CD8-positive, alpha-beta T cell (primary cell): ENCODE measurements at regions of chr12 and their contacts with region 1.

Region 1: GRCh38 chr12:110501752-110502738 is at the starts of genes RAD9B and VPS29:
- DNase-seq: peak; percentile 98 to 100 (median 99)
- ATAC-seq: peak; percentile 92
- H3K4me3 ChIP-seq: peak within 1 kb of the TSS; percentile 73 to 79
- H3K4me3 Mint-ChIP-seq: peak within 1 kb of the TSS; percentile 97
- H3K27ac ChIP-seq: peak within 1 kb of the TSS; percentile 74 to 89
- H3K27ac Mint-ChIP-seq: peak within 1 kb of the TSS; percentile 97
- H3K4me1 ChIP-seq: peaks cover 17% of the 10 kb centered on the region
- H3K4me1 Mint-ChIP-seq: peaks cover 38% of the 10 kb centered on the region
- H3K27me3 ChIP-seq: no peaks in the 10 kb centered on the region
- H3K27me3 Mint-ChIP-seq: no peaks in the 10 kb centered on the region
- CTCF ChIP-seq: no peak
- total RNA-seq, gene RAD9B: 0.57 to 1.5 TPM
- total RNA-seq, gene VPS29: 49.6 to 53.5 TPM

Region 2: DNA sequence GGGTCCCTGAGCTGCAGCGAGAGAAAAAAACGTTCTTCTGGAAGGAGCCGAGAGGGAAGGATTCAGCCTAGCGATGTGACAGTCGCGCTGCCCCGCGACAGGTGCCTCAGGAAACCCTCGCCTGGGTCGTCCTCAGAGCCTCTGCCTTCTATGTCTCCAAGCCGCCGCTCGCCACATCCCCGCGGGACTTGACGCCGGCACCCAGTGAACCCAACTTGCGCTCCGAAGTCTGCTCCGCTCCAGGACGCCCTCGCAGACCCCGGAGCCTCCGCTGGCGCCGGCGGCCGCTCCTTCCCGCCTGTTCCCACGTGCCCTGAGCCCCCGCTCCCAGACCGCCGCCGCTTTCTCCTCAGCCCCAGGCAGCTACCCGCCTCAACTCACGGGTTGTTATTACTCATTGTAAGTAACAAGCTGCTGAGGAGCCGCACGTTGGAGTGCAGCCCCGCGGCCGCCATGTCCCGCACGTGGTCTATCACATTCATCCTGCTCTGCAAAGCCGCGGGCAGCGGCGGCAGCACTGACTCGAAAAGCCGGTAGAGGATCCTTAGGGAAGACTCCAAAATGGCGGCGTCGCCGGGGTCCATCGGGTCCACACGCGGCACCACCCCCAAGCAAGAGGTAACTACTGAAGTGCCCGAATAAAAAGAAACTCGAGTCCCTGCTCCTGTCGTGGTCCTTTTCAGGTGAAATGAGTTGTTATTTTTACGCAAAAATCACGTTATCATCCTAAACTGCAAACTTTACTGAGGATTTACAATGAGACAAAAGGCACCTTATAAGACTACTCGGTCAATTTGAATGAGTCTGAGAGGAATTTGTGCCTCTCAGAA is 98.7 kb before region 1 on chr12 and contains the start of gene ANAPC7:
- CTCF ChIA-PET with region 1: no interaction called
- POLR2A ChIA-PET with region 1: no interaction called
- intact Hi-C with region 1: loop called in 1 of 2 experiments (anchors 1 kb)
- DNase-seq: peak; percentile 69 to 93 (median 87)
- ATAC-seq: peak; percentile 96
- H3K4me3 ChIP-seq: peak within 1 kb of the TSS; percentile 87 to 89
- H3K4me3 Mint-ChIP-seq: peak within 1 kb of the TSS; percentile 100
- H3K27ac ChIP-seq: peak within 1 kb of the TSS; percentile 78 to 96
- H3K27ac Mint-ChIP-seq: peak within 1 kb of the TSS; percentile 98
- H3K4me1 ChIP-seq: peaks cover 20% of the 10 kb centered on the region
- H3K4me1 Mint-ChIP-seq: peaks cover 33% of the 10 kb centered on the region
- H3K27me3 ChIP-seq: no peaks in the 10 kb centered on the region
- H3K27me3 Mint-ChIP-seq: no peaks in the 10 kb centered on the region
- CTCF ChIP-seq: no peak
- total RNA-seq, gene ANAPC7: 22.1 to 23.2 TPM

Region 3: DNA sequence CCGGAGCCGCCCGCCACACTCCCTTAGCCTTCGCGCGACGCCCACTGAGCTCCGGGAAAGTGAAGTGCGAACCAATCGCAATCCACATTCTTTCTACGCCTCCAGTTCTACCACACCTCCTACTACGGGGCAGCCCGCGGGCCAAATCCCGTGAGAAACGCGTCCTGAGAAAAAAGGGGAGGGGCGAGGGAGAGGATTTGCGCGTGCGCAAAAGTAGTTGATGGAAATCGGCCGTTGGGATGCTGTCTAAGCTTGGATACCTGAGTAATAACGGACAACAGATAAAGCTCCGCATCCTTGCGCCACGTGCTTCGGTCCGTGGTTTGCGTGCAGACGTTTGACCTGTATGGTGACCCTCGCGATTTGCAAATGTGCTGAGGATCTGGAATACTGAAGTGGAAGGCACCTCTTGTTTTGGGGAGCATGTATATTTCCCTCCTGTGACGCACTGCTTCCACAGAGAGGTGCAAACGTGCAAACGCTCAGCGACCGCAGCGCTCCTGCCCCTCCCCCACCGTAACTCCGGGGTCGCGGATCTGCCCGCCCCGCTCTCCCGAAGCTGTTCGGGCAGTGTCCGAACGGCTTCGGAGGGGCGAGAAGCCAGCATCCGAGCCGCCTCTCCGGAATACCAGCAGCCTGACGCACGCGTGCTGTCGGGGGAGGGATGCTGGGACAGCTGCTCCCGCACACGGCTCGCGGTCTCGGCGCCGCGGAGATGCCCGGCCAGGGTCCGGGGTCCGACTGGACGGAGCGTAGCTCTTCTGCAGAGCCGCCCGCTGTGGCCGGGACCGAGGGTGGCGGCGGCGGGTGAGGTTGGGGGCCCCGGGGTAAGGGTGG is 33.6 kb before region 1 on chr12 and contains the starts of genes FAM216A and GPN3:
- CTCF ChIA-PET with region 1: interaction called, 18 read pairs
- POLR2A ChIA-PET with region 1: interaction called, 57 read pairs
- intact Hi-C with region 1: loop called (anchors 1 kb)
- DNase-seq: peak; percentile 89 to 98 (median 95)
- ATAC-seq: peak; percentile 89
- H3K4me3 ChIP-seq: peak within 1 kb of the TSS; percentile 90 to 96
- H3K4me3 Mint-ChIP-seq: peak within 1 kb of the TSS; percentile 99
- H3K27ac ChIP-seq: peak within 1 kb of the TSS; percentile 74 to 87
- H3K27ac Mint-ChIP-seq: peak within 1 kb of the TSS; percentile 95
- H3K4me1 ChIP-seq: peaks cover 23% of the 10 kb centered on the region
- H3K4me1 Mint-ChIP-seq: peaks cover 43% of the 10 kb centered on the region
- H3K27me3 ChIP-seq: no peaks in the 10 kb centered on the region
- H3K27me3 Mint-ChIP-seq: no peaks in the 10 kb centered on the region
- CTCF ChIP-seq: no peak
- total RNA-seq, gene FAM216A: 3.5 to 4.5 TPM
- total RNA-seq, gene GPN3: 5.9 to 6.2 TPM